ENCODE measurements at regions of chr1 and their contacts with region 1.

Region 1: DNA sequence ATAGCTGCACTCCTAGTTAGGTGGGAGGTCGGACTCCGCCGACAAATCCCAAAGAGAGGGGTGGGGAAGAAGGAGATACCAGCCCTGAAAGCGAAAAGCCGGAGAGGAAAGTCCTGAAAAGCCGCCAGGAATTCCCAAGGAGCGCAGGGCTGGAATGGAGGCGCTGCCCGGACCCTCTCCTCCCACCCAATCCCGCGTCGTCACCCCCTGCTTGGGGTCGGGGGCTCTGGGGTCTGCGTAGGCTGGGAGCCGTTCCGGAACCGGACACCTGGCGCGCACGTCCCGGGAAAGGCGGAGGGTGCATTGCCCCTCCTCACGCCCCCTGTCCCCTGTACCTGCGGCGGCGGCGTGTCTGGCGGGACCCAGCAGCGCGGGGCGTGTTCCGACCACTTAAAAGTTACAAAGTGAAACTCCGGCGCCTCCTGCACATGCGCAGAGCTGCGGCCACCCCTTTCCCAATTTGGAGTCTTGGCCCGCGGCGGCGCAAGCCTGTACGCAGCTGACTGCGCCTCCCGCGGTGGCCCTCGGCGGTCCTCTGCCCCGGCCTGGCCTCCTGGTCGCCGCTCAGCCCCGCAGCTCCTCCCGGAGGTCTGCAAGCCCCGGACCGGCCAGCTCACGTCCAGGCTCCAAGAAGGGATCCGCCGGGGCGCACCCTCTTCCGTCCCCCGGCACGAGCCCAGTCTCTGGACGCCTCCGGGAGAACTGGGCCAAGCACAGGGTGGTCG is at the start of gene TMEM63A:
- DNase-seq: peak; percentile 95 to 97 (median 97)
- ATAC-seq: peak; percentile 90
- H3K4me3 ChIP-seq: peak within 1 kb of the TSS; percentile 87
- H3K27ac ChIP-seq: peak within 1 kb of the TSS; percentile 88
- H3K4me1 ChIP-seq: peaks cover 23 to 56% of the 10 kb centered on the region in 2 experiments; a peak in 4 of 5 replicates
- H3K27me3 ChIP-seq: no peaks in the 10 kb centered on the region
- CTCF ChIP-seq: peak; percentile 52 to 78 (median 55); a peak in 5 of 6 replicates
- EP300 ChIP-seq: no peak
- POLR2A ChIP-seq: peak; percentile 87
- RAD21 ChIP-seq: peak; percentile 33 to 44; a peak in 3 of 4 replicates
- polyA plus RNA-seq, gene TMEM63A: 2.0 to 2.8 TPM

Region 2: DNA sequence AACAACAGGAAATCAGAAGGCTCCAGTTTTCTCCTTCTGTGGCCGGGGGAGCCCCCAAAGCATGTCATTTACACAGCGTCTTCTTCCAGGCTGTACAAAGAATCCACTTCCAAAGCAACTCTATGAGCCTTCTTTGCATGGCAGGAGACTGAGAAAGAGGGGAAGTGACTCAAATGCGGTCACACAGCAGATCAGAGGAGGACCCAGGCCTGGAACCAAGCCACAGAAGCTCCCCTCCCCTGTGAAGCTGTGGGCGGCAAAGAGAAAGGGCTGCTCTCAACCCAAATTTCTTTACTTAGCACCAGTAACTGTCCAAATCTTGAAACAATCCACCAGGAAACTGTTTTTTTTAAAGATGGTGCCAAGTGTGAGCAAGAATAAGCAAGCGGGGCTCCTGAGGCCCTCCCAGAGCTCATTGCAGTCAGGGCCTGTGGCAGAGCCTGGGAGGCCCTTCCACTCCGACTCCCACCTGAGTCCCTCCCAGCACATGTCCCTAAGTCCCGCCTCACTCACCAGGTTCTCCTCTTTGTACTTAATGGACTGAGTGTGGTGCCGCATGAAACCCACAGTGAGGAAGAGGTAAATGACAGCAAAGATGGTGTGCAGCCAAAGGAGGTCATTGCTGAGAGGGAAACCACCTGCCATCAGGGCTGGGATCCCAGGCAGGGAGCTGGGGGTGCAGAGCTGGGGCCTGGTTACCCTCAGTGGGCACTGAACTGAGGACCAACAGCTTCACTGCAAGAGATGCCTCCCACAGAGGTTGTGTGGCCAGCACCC is 15.9 kb before region 1 on chr1:
- CTCF ChIA-PET with region 1: no interaction called
- POLR2A ChIA-PET with region 1: interaction called, 37 read pairs
- in situ Hi-C with region 1: no loop called
- intact Hi-C with region 1: no loop called
- DNase-seq: no peak
- ATAC-seq: peak; percentile 16; the same call in 2 of the 3 replicates
- H3K4me3 ChIP-seq: no peak overlapping the region
- H3K27ac ChIP-seq: no peak overlapping the region
- H3K4me1 ChIP-seq: no peaks in the 10 kb centered on the region
- H3K27me3 ChIP-seq: no peaks in the 10 kb centered on the region
- CTCF ChIP-seq: no peak
- EP300 ChIP-seq: no peak
- POLR2A ChIP-seq: no peak
- RAD21 ChIP-seq: no peak

Region 3: GRCh38 chr1:225871359-225872074 is 10.6 kb before region 1 on chr1:
- CTCF ChIA-PET with region 1: no interaction called
- POLR2A ChIA-PET with region 1: interaction called, 37 read pairs
- in situ Hi-C with region 1: no loop called
- intact Hi-C with region 1: no loop called
- DNase-seq: no peak
- ATAC-seq: no peak
- H3K4me3 ChIP-seq: no peak overlapping the region
- H3K27ac ChIP-seq: no peak overlapping the region
- H3K4me1 ChIP-seq: no peaks in the 10 kb centered on the region
- H3K27me3 ChIP-seq: no peaks in the 10 kb centered on the region
- CTCF ChIP-seq: no peak
- EP300 ChIP-seq: no peak
- POLR2A ChIP-seq: no peak
- RAD21 ChIP-seq: no peak

Region 4: DNA sequence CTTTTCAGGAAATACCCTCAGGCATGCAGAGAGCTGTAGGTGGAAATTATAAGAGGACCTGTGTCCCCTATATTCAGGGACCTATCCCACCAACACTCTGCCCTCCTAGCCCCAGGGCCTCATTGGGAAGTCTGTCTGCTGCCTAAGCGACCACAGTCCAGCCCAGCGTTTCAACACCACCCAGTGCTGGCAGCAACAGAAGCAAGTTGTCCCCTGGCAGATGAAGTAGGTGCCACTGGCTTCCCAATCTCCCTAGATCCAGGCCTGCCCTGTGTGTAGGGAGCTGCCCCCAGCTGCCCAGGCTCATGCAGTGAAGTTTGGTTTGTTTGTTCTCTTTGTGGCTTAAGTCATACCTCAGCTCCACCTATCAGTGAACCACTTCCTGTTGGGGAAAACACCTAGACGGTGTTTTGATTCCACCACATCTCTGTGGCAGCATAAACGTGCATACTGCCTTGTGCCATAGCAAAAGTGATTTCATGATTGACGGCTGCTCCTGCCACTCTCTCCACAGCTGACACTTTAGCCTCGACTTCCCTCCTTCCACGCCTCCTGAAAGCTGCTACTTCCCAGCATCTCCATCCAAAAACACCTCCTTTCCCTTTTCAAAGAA is 14.9 kb after region 1 on chr1:
- CTCF ChIA-PET with region 1: interaction called, 4 read pairs
- POLR2A ChIA-PET with region 1: interaction called, 16 read pairs
- in situ Hi-C with region 1: no loop called
- intact Hi-C with region 1: no loop called
- DNase-seq: peak in 3 of 4 experiments; percentile 38 to 57 (median 44)
- ATAC-seq: peak; percentile 74
- H3K4me3 ChIP-seq: no peak overlapping the region
- H3K27ac ChIP-seq: peak overlapping the region; percentile 12; the same call in 1 of the 3 replicates
- H3K4me1 ChIP-seq: peaks cover 15 to 20% of the 10 kb centered on the region in 2 experiments
- H3K27me3 ChIP-seq: no peaks in the 10 kb centered on the region
- CTCF ChIP-seq: no peak
- EP300 ChIP-seq: no peak
- POLR2A ChIP-seq: no peak
- RAD21 ChIP-seq: no peak

Region 5: GRCh38 chr1:225903623-225904022 is 21.5 kb after region 1 on chr1:
- CTCF ChIA-PET with region 1: interaction called, 4 read pairs
- POLR2A ChIA-PET with region 1: interaction called, 10 read pairs
- in situ Hi-C with region 1: no loop called
- intact Hi-C with region 1: no loop called
- DNase-seq: no peak
- ATAC-seq: no peak
- H3K4me3 ChIP-seq: no peak overlapping the region
- H3K27ac ChIP-seq: no peak overlapping the region
- H3K4me1 ChIP-seq: peaks cover 9% of the 10 kb centered on the region in 2 experiments; a peak in 4 of 5 replicates
- H3K27me3 ChIP-seq: no peaks in the 10 kb centered on the region
- CTCF ChIP-seq: no peak
- EP300 ChIP-seq: no peak
- POLR2A ChIP-seq: no peak
- RAD21 ChIP-seq: no peak

Region 6: GRCh38 chr1:225923692-225924555 is 41.8 kb after region 1 on chr1 and contains the start of gene PYCR2:
- CTCF ChIA-PET with region 1: interaction called, 3 read pairs
- POLR2A ChIA-PET with region 1: interaction called, 5 read pairs
- in situ Hi-C with region 1: no loop called
- intact Hi-C with region 1: loop called (anchors 2 kb)
- DNase-seq: peak; percentile 99 to 100 (median 99)
- ATAC-seq: peak; percentile 91
- H3K4me3 ChIP-seq: peak within 1 kb of the TSS; percentile 94
- H3K27ac ChIP-seq: peak within 1 kb of the TSS; percentile 93
- H3K4me1 ChIP-seq: peaks cover 44 to 69% of the 10 kb centered on the region in 2 experiments
- H3K27me3 ChIP-seq: no peaks in the 10 kb centered on the region
- CTCF ChIP-seq: peak; percentile 5 to 19 (median 10); a peak in 2 of 6 replicates
- EP300 ChIP-seq: peak; percentile 41
- POLR2A ChIP-seq: peak; percentile 97
- RAD21 ChIP-seq: peak in 1 of 2 experiments; percentile 16; a peak in 2 of 4 replicates
- polyA plus RNA-seq, gene PYCR2: 5.5 to 7.9 TPM

Region 7: DNA sequence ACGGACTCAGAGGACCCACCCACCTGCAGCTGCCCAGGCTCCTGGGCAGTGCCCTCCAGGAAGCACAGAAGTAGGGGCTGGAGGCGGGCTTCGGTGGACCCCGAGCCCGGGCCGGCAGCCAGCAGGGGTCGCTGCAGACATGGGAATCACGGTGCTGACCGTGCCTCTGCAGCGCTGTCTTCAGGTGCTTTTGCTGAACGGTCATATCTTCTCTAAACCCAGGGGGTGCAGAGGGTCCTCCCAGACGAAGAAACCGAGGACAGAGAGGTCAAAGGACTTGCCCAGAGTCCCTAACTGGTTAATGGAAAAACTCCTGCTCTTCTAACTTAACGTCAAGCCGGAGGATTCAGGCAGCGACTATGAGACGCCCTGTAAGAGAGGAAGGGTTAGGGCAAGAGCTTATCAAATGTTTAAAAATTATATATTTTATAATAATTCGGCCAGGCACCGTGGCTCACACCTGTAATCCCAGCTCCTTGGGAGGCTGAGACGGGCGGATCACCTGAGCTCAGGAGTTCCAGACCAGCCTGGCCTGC is 80.4 kb after region 1 on chr1:
- CTCF ChIA-PET with region 1: no interaction called
- POLR2A ChIA-PET with region 1: no interaction called
- in situ Hi-C with region 1: loop called (anchors 5 kb)
- intact Hi-C with region 1: loop called (anchors 5 kb)
- DNase-seq: peak; percentile 89 to 91 (median 90)
- ATAC-seq: peak; percentile 99
- H3K4me3 ChIP-seq: peak overlapping the region; percentile 15
- H3K27ac ChIP-seq: no peak overlapping the region; the same call in 2 of the 3 replicates
- H3K4me1 ChIP-seq: peaks cover 0 to 12% of the 10 kb centered on the region in 2 experiments; a peak in 4 of 5 replicates
- H3K27me3 ChIP-seq: no peaks in the 10 kb centered on the region
- CTCF ChIP-seq: peak; percentile 99
- EP300 ChIP-seq: no peak
- POLR2A ChIP-seq: no peak
- RAD21 ChIP-seq: peak; percentile 87 to 97

Measured in K562 (cell line).